Left colon (tissue), 2 donors: ENCODE measurements at regions of chr4 and their contacts with region 1.

Region 1: GRCh38 chr4:87838890-87839591 is 6.3 kb downstream of the MEPE start:
- DNase-seq: no peak
- ATAC-seq: no peak

Region 2: GRCh38 chr4:87543835-87544461 is 295.1 kb before region 1 on chr4:
- intact Hi-C with region 1: loop called in 1 of 2 experiments (anchors 5 kb)
- DNase-seq: no peak
- ATAC-seq: no peak

Region 3: DNA sequence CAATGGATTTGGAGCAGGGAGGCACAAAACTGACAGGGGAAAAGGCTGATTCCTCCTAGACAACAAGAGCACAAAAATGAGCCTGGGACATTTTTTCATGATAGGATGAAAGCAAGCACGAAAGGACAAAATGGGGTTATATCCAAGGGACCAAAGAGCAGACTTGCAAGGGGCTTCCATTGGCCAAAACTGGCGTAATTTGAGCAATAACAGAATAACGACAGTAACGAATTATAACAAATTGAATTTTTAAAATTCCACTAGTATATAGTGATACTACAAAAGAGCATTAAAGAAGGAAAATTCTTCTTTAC is 146.8 kb after region 1 on chr4:
- intact Hi-C with region 1: no loop called
- DNase-seq: no peak
- ATAC-seq: no peak